ENCODE measurements at regions of chr6 and their contacts with region 1.

Region 1: GRCh38 chr6:7723041-7723447 is 2.9 kb upstream of the BMP6 start:
- H3K4me3 Mint-ChIP-seq: no peak overlapping the region
- H3K27ac Mint-ChIP-seq: no peak overlapping the region
- H3K4me1 Mint-ChIP-seq: peaks cover 24% of the 10 kb centered on the region
- H3K27me3 Mint-ChIP-seq: peaks cover 59% of the 10 kb centered on the region

Region 2: GRCh38 chr6:7992002-7992815 is 269.2 kb after region 1 on chr6:
- intact Hi-C with region 1: loop called (anchors 5 kb)
- H3K4me3 Mint-ChIP-seq: no peak overlapping the region
- H3K27ac Mint-ChIP-seq: no peak overlapping the region
- H3K4me1 Mint-ChIP-seq: no peaks in the 10 kb centered on the region
- H3K27me3 Mint-ChIP-seq: no peaks in the 10 kb centered on the region

Region 3: DNA sequence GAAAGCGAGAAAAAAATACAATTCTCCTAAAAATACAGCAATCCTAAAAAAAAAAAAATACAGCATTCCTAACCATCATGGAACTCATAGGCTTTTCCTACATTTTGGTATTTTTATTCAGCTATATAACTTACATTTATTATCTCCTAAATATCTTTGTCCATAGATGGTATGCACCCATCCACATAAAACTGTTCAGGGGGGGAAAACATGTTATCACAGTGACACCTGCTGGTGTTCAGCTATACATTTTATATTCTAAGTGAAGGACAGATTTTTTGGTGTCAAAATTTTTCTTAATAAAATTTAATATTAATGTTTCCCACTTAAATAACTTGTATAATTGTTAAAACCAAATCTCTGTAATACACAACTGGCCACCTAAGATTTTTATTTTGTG is 283.2 kb after region 1 on chr6:
- intact Hi-C with region 1: loop called (anchors 5 kb)
- H3K4me3 Mint-ChIP-seq: no peak overlapping the region
- H3K27ac Mint-ChIP-seq: no peak overlapping the region
- H3K4me1 Mint-ChIP-seq: peaks cover 5% of the 10 kb centered on the region
- H3K27me3 Mint-ChIP-seq: no peaks in the 10 kb centered on the region

Region 4: GRCh38 chr6:8219352-8219943 is 496.4 kb after region 1 on chr6:
- intact Hi-C with region 1: loop called (anchors 5 kb)
- H3K4me3 Mint-ChIP-seq: no peak overlapping the region
- H3K27ac Mint-ChIP-seq: no peak overlapping the region
- H3K4me1 Mint-ChIP-seq: no peaks in the 10 kb centered on the region
- H3K27me3 Mint-ChIP-seq: peaks cover 4% of the 10 kb centered on the region

Measured in dendritic cell treated with granulocyte-macrophage colony-stimulating factor and Interleukin-4, amounts not matched to agents 40 ng/mL and 50 ng/mL, for 4 days (primary cell).